WTC11 (cell line): ENCODE measurements at regions of chr6 and their contacts with region 1.

Region 1: DNA sequence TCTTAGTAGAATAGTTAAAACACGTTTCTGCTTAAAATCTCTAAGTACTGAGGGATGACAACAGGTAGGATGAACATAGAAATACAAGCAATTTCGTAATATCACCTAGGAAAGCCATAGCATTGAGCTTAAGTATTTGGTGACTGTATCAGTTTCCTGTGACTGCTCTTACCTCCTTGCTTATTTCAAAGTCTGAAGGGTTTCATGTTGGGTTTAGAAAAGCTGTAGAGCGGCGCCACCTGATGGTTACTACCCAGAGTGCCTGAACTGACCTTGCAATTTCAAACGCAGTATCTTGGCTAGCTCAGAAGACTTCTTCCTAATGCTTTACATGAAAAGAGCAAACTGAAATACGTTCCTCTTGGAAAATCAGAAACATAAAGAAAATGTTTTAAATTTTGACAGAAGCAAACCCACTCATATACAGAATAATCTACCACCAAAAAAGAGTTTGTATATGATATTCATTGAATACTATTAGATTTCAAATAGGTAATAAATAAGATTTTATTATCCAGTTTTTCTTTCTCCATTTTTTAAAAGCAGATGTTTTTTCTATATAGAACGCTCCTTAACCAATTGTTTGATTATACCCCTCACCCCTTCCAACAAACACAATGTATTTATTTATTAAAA is 82.3 kb upstream of the RIPOR2 start:
- DNase-seq: peak; percentile 80
- ATAC-seq: peak; percentile 87
- H3K4me3 Mint-ChIP-seq: no peak overlapping the region
- H3K27ac Mint-ChIP-seq: peak overlapping the region; percentile 34; the same call in 1 of the 2 replicates
- H3K4me1 Mint-ChIP-seq: peaks cover 24% of the 10 kb centered on the region
- H3K27me3 Mint-ChIP-seq: no peaks in the 10 kb centered on the region
- CTCF ChIP-seq: peak; percentile 63

Region 2: DNA sequence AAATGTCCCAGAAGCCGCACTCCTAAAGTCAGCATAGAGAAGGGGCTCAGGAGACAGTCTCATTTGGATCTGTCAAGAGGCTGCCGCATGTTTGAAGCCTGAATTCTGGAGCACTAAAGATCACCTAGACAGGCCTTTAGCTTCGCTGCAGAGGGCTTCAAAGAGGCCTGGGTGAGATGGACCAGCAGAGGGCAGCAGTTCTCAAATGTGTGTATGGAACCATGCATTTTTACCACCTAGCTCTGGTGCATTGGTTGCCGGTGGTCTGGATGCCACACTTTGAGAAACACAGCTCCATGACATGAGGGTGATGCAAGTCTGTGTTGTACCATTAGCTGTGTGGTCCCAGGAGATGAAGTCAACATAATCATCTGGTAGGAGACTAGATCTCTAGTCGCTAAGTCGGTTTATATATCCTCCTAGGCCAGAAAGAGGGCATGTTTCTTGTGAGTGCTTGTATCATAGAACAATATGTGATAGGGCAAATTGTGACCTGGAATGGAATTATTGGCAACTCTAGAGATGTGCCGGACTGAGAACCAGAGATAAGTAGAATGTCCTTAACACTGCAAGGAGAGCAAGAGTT is 436.9 kb before region 1 on chr6:
- CTCF ChIA-PET with region 1: interaction called, 15 read pairs
- POLR2A ChIA-PET with region 1: no interaction called
- DNase-seq: peak; percentile 85
- ATAC-seq: peak; percentile 89
- H3K4me3 Mint-ChIP-seq: no peak overlapping the region
- H3K27ac Mint-ChIP-seq: no peak overlapping the region
- H3K4me1 Mint-ChIP-seq: peaks cover 25% of the 10 kb centered on the region
- H3K27me3 Mint-ChIP-seq: no peaks in the 10 kb centered on the region
- CTCF ChIP-seq: peak; percentile 55; the same call in 1 of the 2 replicates

Region 3: DNA sequence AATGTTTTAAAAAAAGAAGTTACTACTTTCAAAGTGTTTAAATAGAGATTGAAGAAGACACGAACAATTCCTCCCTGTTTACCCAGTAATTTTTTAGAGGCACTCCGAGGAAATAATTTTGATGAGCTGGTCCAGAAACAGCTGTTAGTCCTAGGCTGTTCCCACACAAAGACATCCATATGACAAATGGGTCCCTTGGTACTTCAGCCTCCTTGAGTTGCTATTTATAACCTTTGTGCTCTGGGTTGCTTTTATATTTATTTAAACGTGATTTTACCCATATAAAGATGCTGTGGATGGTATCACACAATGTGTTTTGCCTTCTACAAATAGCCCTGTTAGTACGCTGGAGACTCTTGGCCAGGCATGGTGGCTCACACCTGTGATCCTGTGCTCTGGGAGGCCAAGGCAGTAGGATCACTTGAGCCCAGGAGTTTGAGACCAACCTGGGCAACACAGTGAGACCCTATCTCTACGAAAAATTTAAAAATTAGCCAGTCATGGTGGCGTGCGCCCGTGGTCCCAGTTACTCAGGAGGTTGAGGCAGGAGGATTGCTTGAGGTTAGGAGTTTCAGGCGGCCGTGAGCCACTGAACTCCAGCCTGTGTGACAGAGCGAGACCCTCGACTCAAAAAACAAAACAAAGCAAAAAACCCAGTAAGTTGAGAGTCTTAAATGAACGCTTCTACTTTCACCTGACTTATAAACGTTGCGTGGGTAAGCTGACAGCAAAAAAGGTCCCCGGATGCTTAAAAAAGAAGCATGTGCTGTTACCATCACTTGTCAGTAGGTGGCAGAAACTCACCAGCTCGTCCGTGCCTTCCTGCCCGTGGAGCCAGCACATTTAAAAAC is 162.4 kb before region 1 on chr6:
- CTCF ChIA-PET with region 1: interaction called, 156 read pairs
- POLR2A ChIA-PET with region 1: no interaction called
- DNase-seq: peak; percentile 44
- ATAC-seq: peak; percentile 89
- H3K4me3 Mint-ChIP-seq: no peak overlapping the region
- H3K27ac Mint-ChIP-seq: no peak overlapping the region
- H3K4me1 Mint-ChIP-seq: peaks cover 35% of the 10 kb centered on the region
- H3K27me3 Mint-ChIP-seq: no peaks in the 10 kb centered on the region
- CTCF ChIP-seq: peak; percentile 66; the same call in 1 of the 2 replicates

Region 4: GRCh38 chr6:24899997-24900325 is 118.1 kb before region 1 on chr6:
- CTCF ChIA-PET with region 1: interaction called, 14 read pairs
- POLR2A ChIA-PET with region 1: interaction called, 11 read pairs
- DNase-seq: no peak
- ATAC-seq: no peak
- H3K4me3 Mint-ChIP-seq: no peak overlapping the region
- H3K27ac Mint-ChIP-seq: no peak overlapping the region
- H3K4me1 Mint-ChIP-seq: peaks cover 23% of the 10 kb centered on the region
- H3K27me3 Mint-ChIP-seq: no peaks in the 10 kb centered on the region
- CTCF ChIP-seq: no peak

Region 5: DNA sequence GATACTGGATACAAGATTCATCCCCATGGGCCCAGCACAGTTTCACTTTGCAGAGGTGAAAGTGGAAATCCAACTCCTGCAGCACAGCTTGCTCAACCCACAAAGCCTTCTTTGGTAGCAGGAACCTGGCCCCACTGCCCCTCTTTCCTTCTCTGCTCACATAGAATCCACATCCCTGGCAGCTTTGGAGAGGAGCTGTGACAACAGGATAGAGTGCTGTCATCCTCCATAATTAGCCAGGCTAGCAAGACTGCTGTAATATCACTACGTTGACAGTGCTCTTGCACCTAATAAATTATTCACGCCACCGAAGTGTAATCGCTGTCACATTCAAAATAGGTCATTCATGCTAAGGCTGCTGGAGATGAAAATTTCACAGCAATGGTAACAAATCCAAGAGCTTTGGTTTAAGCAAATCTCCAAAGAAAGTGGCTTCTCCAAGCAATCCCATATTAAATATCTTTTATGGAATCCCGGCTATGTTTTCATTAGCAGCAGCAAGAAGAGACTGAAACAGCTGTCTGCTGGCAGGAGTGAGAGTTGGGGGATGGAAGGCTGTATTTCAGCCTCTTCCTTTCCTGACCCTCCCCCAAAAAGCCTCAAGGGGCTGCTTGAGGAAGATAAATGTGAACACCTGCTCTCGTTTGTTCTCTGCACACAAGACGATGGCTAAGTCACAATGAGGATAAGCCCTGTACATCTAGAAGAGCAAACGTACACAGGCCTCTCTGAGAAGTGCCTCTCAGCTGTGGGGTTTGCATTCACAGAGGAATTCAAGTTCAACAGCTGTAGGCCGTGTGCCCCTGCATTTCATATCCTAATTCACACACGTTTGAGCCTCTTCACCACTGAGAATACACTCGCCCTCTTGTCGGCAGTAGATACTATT is 98.8 kb before region 1 on chr6:
- CTCF ChIA-PET with region 1: interaction called, 15 read pairs
- POLR2A ChIA-PET with region 1: no interaction called
- DNase-seq: peak; percentile 18
- ATAC-seq: peak; percentile 32
- H3K4me3 Mint-ChIP-seq: no peak overlapping the region
- H3K27ac Mint-ChIP-seq: peak overlapping the region; percentile 80
- H3K4me1 Mint-ChIP-seq: peaks cover 50% of the 10 kb centered on the region
- H3K27me3 Mint-ChIP-seq: no peaks in the 10 kb centered on the region
- CTCF ChIP-seq: no peak

Region 6: GRCh38 chr6:24980507-24981387 is 37.3 kb before region 1 on chr6:
- CTCF ChIA-PET with region 1: interaction called, 12 read pairs
- POLR2A ChIA-PET with region 1: no interaction called
- DNase-seq: peak; percentile 23
- ATAC-seq: peak; percentile 84
- H3K4me3 Mint-ChIP-seq: peak overlapping the region; percentile 34
- H3K27ac Mint-ChIP-seq: peak overlapping the region; percentile 100
- H3K4me1 Mint-ChIP-seq: peaks cover 86% of the 10 kb centered on the region
- H3K27me3 Mint-ChIP-seq: no peaks in the 10 kb centered on the region
- CTCF ChIP-seq: no peak

Region 7: GRCh38 chr6:25061289-25061936 is 43.4 kb after region 1 on chr6:
- CTCF ChIA-PET with region 1: interaction called, 14 read pairs
- POLR2A ChIA-PET with region 1: no interaction called
- DNase-seq: no peak
- ATAC-seq: peak; percentile 85
- H3K4me3 Mint-ChIP-seq: no peak overlapping the region
- H3K27ac Mint-ChIP-seq: peak overlapping the region; percentile 89
- H3K4me1 Mint-ChIP-seq: peaks cover 24% of the 10 kb centered on the region
- H3K27me3 Mint-ChIP-seq: no peaks in the 10 kb centered on the region
- CTCF ChIP-seq: no peak

Region 8: DNA sequence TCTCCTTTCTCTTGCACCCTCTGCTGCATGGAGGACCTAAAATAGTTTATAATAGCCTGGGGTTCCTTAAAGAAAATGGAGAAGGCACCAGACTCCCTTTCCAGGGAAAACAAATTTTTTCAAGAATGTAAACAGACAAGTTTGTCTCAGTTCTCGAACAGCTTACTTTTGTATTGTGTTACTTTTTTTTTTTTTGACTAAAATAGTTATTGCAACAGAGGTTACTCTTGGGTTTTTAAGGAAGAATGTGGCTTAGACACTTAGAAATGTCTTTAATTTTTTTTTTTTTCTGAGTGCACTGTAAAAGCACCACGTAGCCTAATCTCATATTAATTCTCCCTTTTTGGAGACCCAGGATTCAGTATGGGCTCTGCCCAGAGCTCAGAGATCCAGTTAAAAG is 112.5 kb after region 1 on chr6:
- CTCF ChIA-PET with region 1: no interaction called
- POLR2A ChIA-PET with region 1: no interaction called
- DNase-seq: no peak
- ATAC-seq: no peak
- H3K4me3 Mint-ChIP-seq: no peak overlapping the region
- H3K27ac Mint-ChIP-seq: no peak overlapping the region
- H3K4me1 Mint-ChIP-seq: peaks cover 26% of the 10 kb centered on the region
- H3K27me3 Mint-ChIP-seq: no peaks in the 10 kb centered on the region
- CTCF ChIP-seq: no peak

Region 9: DNA sequence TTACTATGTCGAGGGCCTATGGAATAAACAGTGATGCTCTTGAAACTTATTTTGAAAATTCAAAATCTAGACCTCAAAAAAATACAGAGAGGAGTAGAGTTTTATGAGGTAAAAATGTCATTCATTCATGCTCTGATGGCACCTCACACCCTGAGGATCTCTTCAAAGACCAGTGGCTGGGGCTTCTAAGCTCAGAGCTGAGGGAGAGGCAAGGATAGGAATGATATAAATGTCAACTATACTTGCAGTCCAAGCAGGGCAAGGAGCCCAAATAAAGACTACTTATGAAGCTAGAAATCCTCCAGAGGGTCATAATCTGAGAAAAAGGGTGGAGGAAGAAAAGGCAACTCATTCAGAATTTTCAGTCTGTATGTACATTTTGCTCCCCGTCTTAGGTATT is 124.5 kb after region 1 on chr6:
- CTCF ChIA-PET with region 1: no interaction called
- POLR2A ChIA-PET with region 1: no interaction called
- DNase-seq: no peak
- ATAC-seq: no peak
- H3K4me3 Mint-ChIP-seq: no peak overlapping the region
- H3K27ac Mint-ChIP-seq: no peak overlapping the region
- H3K4me1 Mint-ChIP-seq: no peaks in the 10 kb centered on the region
- H3K27me3 Mint-ChIP-seq: no peaks in the 10 kb centered on the region
- CTCF ChIP-seq: no peak

Region 10: DNA sequence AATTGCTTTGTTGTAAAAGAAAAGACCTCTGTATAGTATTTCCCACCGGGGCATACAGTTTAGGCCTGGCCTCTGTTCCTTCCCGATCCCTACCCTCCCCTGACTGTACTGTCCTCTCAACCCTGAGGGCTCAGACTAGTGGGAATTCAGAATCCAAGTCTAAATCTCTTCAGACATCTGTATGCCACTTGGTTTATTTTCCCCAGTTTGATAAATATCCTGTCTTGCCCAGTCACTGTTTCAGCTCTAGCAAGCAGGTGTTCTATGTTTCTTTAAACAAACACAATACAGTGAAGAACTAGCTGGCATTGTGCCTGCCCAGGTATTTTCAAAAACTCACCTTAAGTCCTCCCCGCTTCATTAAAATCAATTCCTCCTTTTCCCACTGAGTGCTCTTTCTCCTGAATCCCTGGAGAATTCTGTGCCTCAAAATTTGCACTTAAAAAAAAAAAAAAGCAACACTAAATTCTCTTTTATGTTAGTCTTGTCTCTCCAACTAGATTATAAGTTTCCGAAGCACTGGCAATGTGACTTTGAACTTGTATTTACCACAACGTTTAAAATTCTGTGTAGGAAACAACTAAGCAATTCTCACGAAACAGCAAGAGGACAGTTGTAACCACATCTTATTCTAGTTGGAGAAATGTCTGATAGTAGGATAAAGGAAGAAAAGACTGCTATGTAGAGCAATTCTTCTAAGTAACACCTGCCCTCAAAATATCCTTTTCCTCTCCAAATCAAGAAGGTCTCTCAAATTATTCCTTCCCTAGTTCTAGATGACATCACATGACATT is 149.1 kb after region 1 on chr6:
- CTCF ChIA-PET with region 1: no interaction called
- POLR2A ChIA-PET with region 1: no interaction called
- DNase-seq: no peak
- ATAC-seq: no peak
- H3K4me3 Mint-ChIP-seq: no peak overlapping the region
- H3K27ac Mint-ChIP-seq: no peak overlapping the region
- H3K4me1 Mint-ChIP-seq: no peaks in the 10 kb centered on the region
- H3K27me3 Mint-ChIP-seq: no peaks in the 10 kb centered on the region; the same call in 1 of the 2 replicates
- CTCF ChIP-seq: no peak

Region 11: DNA sequence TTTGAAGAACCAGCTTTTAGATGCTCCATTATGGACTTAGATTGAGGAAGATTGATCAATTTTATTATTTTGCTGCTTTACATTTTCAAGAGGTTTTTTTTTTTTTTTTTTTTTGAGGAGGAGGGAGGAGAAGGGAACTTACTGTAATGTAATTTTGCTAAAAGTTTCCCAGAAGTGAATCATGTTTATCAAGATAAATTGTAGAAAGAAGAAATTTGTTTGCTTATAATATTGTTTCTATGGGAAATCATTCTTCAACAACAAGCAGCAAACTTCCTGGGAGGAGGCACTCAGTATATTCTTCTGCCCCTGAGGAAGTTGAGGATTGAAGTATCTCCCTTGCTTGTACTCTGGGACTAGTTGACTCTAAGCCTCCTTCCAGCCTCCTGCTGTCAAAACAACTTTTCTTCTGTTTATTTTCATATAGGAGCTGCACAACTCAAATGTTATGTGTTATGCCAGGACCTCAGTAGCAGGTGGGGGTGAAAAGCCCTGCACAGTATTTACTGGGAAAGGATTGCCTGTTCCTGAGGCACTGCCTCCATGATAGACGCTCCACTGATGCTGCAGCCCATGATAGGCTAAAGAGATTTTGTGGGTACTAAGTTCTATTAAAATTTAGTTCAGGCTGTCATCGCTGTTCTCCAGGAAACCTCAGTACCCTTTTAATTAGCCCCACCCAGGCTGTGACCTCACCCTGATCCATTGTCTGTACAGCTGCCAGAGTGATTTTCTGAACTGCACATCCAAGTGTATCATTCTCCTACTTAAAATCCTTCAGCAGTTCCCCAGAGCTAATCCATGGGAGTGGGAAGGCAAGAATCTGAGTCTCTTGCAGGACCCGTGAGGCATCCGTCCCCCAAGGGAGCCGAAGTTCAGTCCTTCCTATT is 313.0 kb after region 1 on chr6:
- CTCF ChIA-PET with region 1: no interaction called
- POLR2A ChIA-PET with region 1: no interaction called
- DNase-seq: no peak
- ATAC-seq: 0 out of 2 replicates have a peak, but pooled peaks have one; percentile 12
- H3K4me3 Mint-ChIP-seq: no peak overlapping the region
- H3K27ac Mint-ChIP-seq: peak overlapping the region; percentile 35; the same call in 1 of the 2 replicates
- H3K4me1 Mint-ChIP-seq: peaks cover 72% of the 10 kb centered on the region
- H3K27me3 Mint-ChIP-seq: no peaks in the 10 kb centered on the region
- CTCF ChIP-seq: no peak